CD8-positive, alpha-beta T cell (primary cell): ENCODE measurements at regions of chr19 and their contacts with region 1.

Region 1: GRCh38 chr19:19627621-19628500 is at the start of gene LPAR2:
- DNase-seq: peak; percentile 54 to 91 (median 85)
- ATAC-seq: peak; percentile 85
- H3K4me3 ChIP-seq: peak within 1 kb of the TSS; percentile 70 to 73
- H3K4me3 Mint-ChIP-seq: peak within 1 kb of the TSS; percentile 88
- H3K27ac ChIP-seq: peak within 1 kb of the TSS; percentile 64 to 71
- H3K27ac Mint-ChIP-seq: peak within 1 kb of the TSS; percentile 94
- H3K4me1 ChIP-seq: peaks cover 28% of the 10 kb centered on the region
- H3K4me1 Mint-ChIP-seq: peaks cover 30% of the 10 kb centered on the region
- H3K27me3 ChIP-seq: no peaks in the 10 kb centered on the region
- H3K27me3 Mint-ChIP-seq: no peaks in the 10 kb centered on the region
- CTCF ChIP-seq: no peak
- total RNA-seq, gene LPAR2: 63.8 to 67.4 TPM

Region 2: DNA sequence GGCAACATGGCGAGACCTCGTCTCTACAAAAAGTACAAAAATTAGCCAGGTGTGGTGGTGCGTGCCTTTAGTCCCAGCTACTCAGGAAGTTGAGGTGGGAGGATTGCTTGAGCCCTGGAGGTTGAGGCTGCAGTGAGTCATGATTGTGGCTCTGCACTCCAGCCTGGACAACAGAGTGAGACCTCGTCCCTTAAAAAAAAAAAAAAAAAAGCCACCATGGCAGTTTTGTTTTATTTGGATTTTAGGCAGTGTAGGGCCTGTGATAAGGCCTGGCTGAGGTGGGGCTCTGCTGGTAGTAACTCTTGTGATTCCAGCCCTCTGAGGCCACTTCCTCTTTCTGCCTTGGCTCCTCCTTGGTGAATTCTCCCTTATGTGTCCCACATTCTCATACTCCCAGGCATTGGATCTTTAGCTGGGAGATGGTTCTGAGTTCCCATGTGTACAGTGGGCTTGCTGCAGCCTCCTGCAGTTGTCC is 183.1 kb before region 1 on chr19:
- CTCF ChIA-PET with region 1: no interaction called
- POLR2A ChIA-PET with region 1: no interaction called
- intact Hi-C with region 1: no loop called
- DNase-seq: peak in 3 of 9 experiments; percentile 37 to 58 (median 40)
- ATAC-seq: no peak
- H3K4me3 ChIP-seq: no peak overlapping the region
- H3K4me3 Mint-ChIP-seq: peak overlapping the region; percentile 50
- H3K27ac ChIP-seq: peak overlapping the region in 1 of 2 experiments; percentile 76
- H3K27ac Mint-ChIP-seq: peak overlapping the region; percentile 91
- H3K4me1 ChIP-seq: peaks cover 58% of the 10 kb centered on the region
- H3K4me1 Mint-ChIP-seq: peaks cover 80% of the 10 kb centered on the region
- H3K27me3 ChIP-seq: no peaks in the 10 kb centered on the region
- H3K27me3 Mint-ChIP-seq: no peaks in the 10 kb centered on the region
- CTCF ChIP-seq: no peak

Region 3: DNA sequence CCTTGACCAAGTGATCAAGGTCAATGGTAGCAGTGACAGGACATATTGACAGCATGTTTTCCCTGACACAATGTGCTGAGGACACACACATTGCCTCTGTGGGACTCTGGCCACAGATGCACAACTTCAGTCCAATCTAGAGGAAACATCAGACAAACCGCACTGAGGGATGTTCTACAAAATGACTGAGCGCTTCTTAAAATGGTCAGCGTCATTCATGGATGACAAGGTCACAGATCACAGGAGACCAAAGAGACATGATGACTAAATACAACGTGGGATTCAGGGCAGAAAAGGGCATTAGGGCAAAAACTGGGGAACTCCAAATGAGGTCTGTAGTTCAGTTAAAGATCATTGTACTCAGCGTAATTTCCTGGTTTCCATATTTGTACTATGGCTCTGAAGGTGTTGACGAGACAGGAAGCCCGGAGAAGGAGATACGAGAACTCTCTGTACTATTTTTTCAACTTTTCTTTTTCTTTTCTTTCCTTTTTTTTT is 30.0 kb before region 1 on chr19:
- CTCF ChIA-PET with region 1: interaction called, 4 read pairs
- POLR2A ChIA-PET with region 1: interaction called, 6 read pairs
- intact Hi-C with region 1: loop called (anchors 1 to 2 kb)
- DNase-seq: peak in 7 of 9 experiments; percentile 22 to 96 (median 62)
- ATAC-seq: peak; percentile 69
- H3K4me3 ChIP-seq: peak overlapping the region in 1 of 2 experiments; percentile 8
- H3K4me3 Mint-ChIP-seq: peak overlapping the region; percentile 37
- H3K27ac ChIP-seq: peak overlapping the region; percentile 94 to 95
- H3K27ac Mint-ChIP-seq: peak overlapping the region; percentile 99
- H3K4me1 ChIP-seq: peaks cover 58% of the 10 kb centered on the region
- H3K4me1 Mint-ChIP-seq: peaks cover 53% of the 10 kb centered on the region
- H3K27me3 ChIP-seq: no peaks in the 10 kb centered on the region
- H3K27me3 Mint-ChIP-seq: no peaks in the 10 kb centered on the region
- CTCF ChIP-seq: no peak